Mammary epithelial cell (primary cell): ENCODE measurements at regions of chr12 and their contacts with region 1.

Region 1: GRCh38 chr12:59834659-59835474 is 239.0 kb downstream of the SLC16A7 start:
- DNase-seq: no peak
- H3K4me3 ChIP-seq: no peak overlapping the region
- H3K27ac ChIP-seq: no peak overlapping the region
- H3K4me1 ChIP-seq: no peaks in the 10 kb centered on the region
- H3K27me3 ChIP-seq: no peaks in the 10 kb centered on the region
- CTCF ChIP-seq: peak; percentile 40 to 47

Region 2: GRCh38 chr12:59595883-59596540 is 238.9 kb before region 1 on chr12 and contains the start of gene SLC16A7:
- CTCF ChIA-PET with region 1: no interaction called
- dilution Hi-C with region 1: no loop called
- in situ Hi-C with region 1: no loop called
- intact Hi-C with region 1: no loop called
- DNase-seq: peak; percentile 89
- H3K4me3 ChIP-seq: peak within 1 kb of the TSS; percentile 67 to 83 (median 75)
- H3K27ac ChIP-seq: peak within 1 kb of the TSS; percentile 11
- H3K4me1 ChIP-seq: peaks cover 22% of the 10 kb centered on the region
- H3K27me3 ChIP-seq: no peaks in the 10 kb centered on the region
- CTCF ChIP-seq: no peak
- total RNA-seq, gene SLC16A7: 8.2 to 27.3 TPM

Region 3: GRCh38 chr12:59820594-59821011 is 14.3 kb before region 1 on chr12:
- CTCF ChIA-PET with region 1: no interaction called
- dilution Hi-C with region 1: no loop called
- in situ Hi-C with region 1: no loop called
- intact Hi-C with region 1: no loop called
- DNase-seq: no peak
- H3K4me3 ChIP-seq: no peak overlapping the region
- H3K27ac ChIP-seq: no peak overlapping the region
- H3K4me1 ChIP-seq: no peaks in the 10 kb centered on the region
- H3K27me3 ChIP-seq: no peaks in the 10 kb centered on the region
- CTCF ChIP-seq: no peak

Region 4: GRCh38 chr12:61397668-61398067 is 1562.8 kb after region 1 on chr12:
- CTCF ChIA-PET with region 1: interaction called, 12 read pairs
- dilution Hi-C with region 1: no loop called
- in situ Hi-C with region 1: no loop called
- intact Hi-C with region 1: no loop called
- DNase-seq: peak; percentile 52
- H3K4me3 ChIP-seq: no peak overlapping the region
- H3K27ac ChIP-seq: no peak overlapping the region
- H3K4me1 ChIP-seq: no peaks in the 10 kb centered on the region
- H3K27me3 ChIP-seq: no peaks in the 10 kb centered on the region
- CTCF ChIP-seq: no peak